Esophagus muscularis mucosa (tissue), 4 donors: ENCODE measurements at regions of chr11 and their contacts with region 1.

Region 1: DNA sequence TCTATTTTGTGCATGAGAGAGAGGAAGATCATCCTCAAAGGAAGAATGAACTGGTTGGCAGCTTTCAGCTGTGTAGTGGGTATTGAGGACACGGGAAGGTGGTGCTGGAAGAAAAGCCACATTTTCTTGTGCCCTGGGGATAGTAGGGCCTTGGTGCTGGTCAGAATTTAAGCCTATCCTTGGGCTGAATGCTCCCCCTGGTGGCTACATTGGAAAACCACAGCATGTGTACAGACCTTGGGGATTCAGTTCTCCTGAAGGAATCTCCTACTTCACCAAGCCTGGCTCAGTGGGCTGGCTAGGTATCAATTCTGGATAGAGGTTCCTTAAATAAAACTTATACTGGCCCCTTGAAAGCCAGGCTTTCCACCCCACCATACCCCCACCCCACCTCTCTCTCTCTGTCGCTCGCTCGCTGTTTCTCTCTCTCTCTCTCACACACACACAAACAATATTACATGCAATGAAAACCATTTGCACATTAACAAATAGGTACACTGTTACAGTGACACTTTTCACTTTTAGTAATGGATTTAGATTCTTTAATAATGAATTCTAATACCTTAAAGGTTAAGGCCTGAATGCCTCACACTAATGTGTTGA is 2.8 kb upstream of the OR51M1 start:
- DNase-seq: no peak
- H3K4me3 ChIP-seq: no peak overlapping the region
- H3K27ac ChIP-seq: no peak overlapping the region
- H3K4me1 ChIP-seq: no peaks in the 10 kb centered on the region
- H3K27me3 ChIP-seq: no peaks in the 10 kb centered on the region
- CTCF ChIP-seq: peak; percentile 28 to 56 (median 40)
- EP300 ChIP-seq: no peak
- POLR2A ChIP-seq: no peak

Region 2: GRCh38 chr11:4983841-4984240 is 397.0 kb before region 1 on chr11:
- intact Hi-C with region 1: no loop called
- DNase-seq: no peak
- H3K4me3 ChIP-seq: no peak overlapping the region
- H3K27ac ChIP-seq: no peak overlapping the region
- H3K4me1 ChIP-seq: no peaks in the 10 kb centered on the region
- H3K27me3 ChIP-seq: no peaks in the 10 kb centered on the region
- CTCF ChIP-seq: no peak
- EP300 ChIP-seq: no peak
- POLR2A ChIP-seq: no peak

Region 3: GRCh38 chr11:5123802-5124521 is 256.9 kb before region 1 on chr11:
- intact Hi-C with region 1: loop called (anchors 10 kb)
- DNase-seq: no peak
- H3K4me3 ChIP-seq: no peak overlapping the region
- H3K27ac ChIP-seq: no peak overlapping the region
- H3K4me1 ChIP-seq: peaks cover 0 to 4% (median 0%) of the 10 kb centered on the region in 4 donors
- H3K27me3 ChIP-seq: no peaks in the 10 kb centered on the region
- CTCF ChIP-seq: peak; percentile 54 to 84 (median 66)
- EP300 ChIP-seq: no peak
- POLR2A ChIP-seq: no peak